ENCODE measurements at regions of chr5 and their contacts with region 1.

Region 1: GRCh38 chr5:132456296-132457001 is 34.1 kb downstream of the IRF1 start:
- DNase-seq: peak; percentile 85
- ATAC-seq: peak; percentile 65
- H3K4me3 Mint-ChIP-seq: peak overlapping the region; percentile 54
- H3K27ac Mint-ChIP-seq: peak overlapping the region; percentile 99
- H3K4me1 Mint-ChIP-seq: peaks cover 90% of the 10 kb centered on the region
- H3K27me3 Mint-ChIP-seq: no peaks in the 10 kb centered on the region

Region 2: GRCh38 chr5:132073231-132074013 is 383.0 kb before region 1 on chr5 and contains the start of gene CSF2:
- CTCF ChIA-PET with region 1: no interaction called
- DNase-seq: no peak
- ATAC-seq: no peak
- H3K4me3 Mint-ChIP-seq: peak within 1 kb of the TSS; percentile 26
- H3K27ac Mint-ChIP-seq: peak within 1 kb of the TSS; percentile 69
- H3K4me1 Mint-ChIP-seq: peaks cover 84% of the 10 kb centered on the region
- H3K27me3 Mint-ChIP-seq: no peaks in the 10 kb centered on the region
- total RNA-seq, gene CSF2: 4.9 to 164 TPM

Region 3: GRCh38 chr5:132410451-132411381 is 45.7 kb before region 1 on chr5:
- CTCF ChIA-PET with region 1: interaction called, 10 read pairs
- DNase-seq: peak; percentile 91
- ATAC-seq: peak; percentile 79
- H3K4me3 Mint-ChIP-seq: peak overlapping the region; percentile 97
- H3K27ac Mint-ChIP-seq: peak overlapping the region; percentile 99
- H3K4me1 Mint-ChIP-seq: peaks cover 58% of the 10 kb centered on the region
- H3K27me3 Mint-ChIP-seq: no peaks in the 10 kb centered on the region

Region 4: GRCh38 chr5:132437604-132438266 is 18.7 kb before region 1 on chr5:
- CTCF ChIA-PET with region 1: interaction called, 131 read pairs
- DNase-seq: peak; percentile 86
- ATAC-seq: peak; percentile 96
- H3K4me3 Mint-ChIP-seq: peak overlapping the region; percentile 43
- H3K27ac Mint-ChIP-seq: peak overlapping the region; percentile 86
- H3K4me1 Mint-ChIP-seq: peaks cover 81% of the 10 kb centered on the region
- H3K27me3 Mint-ChIP-seq: no peaks in the 10 kb centered on the region

Region 5: GRCh38 chr5:132473019-132473531 is 16.6 kb after region 1 on chr5:
- CTCF ChIA-PET with region 1: interaction called, 56 read pairs
- DNase-seq: peak; percentile 96
- ATAC-seq: peak; percentile 90
- H3K4me3 Mint-ChIP-seq: peak overlapping the region; percentile 6
- H3K27ac Mint-ChIP-seq: peak overlapping the region; percentile 89
- H3K4me1 Mint-ChIP-seq: peaks cover 91% of the 10 kb centered on the region
- H3K27me3 Mint-ChIP-seq: no peaks in the 10 kb centered on the region

Region 6: GRCh38 chr5:132490486-132491367 is 34.3 kb after region 1 on chr5 and contains the start of gene IRF1:
- CTCF ChIA-PET with region 1: interaction called, 25 read pairs
- DNase-seq: peak; percentile 98
- ATAC-seq: peak; percentile 79
- H3K4me3 Mint-ChIP-seq: peak within 1 kb of the TSS; percentile 95
- H3K27ac Mint-ChIP-seq: peak within 1 kb of the TSS; percentile 97
- H3K4me1 Mint-ChIP-seq: peaks cover 66% of the 10 kb centered on the region
- H3K27me3 Mint-ChIP-seq: no peaks in the 10 kb centered on the region
- total RNA-seq, gene IRF1: 205 to 223 TPM

Region 7: GRCh38 chr5:132510076-132510475 is 53.6 kb after region 1 on chr5:
- CTCF ChIA-PET with region 1: no interaction called
- DNase-seq: no peak
- ATAC-seq: no peak
- H3K4me3 Mint-ChIP-seq: no peak overlapping the region
- H3K27ac Mint-ChIP-seq: no peak overlapping the region
- H3K4me1 Mint-ChIP-seq: peaks cover 13% of the 10 kb centered on the region
- H3K27me3 Mint-ChIP-seq: peaks cover 22% of the 10 kb centered on the region

Region 8: DNA sequence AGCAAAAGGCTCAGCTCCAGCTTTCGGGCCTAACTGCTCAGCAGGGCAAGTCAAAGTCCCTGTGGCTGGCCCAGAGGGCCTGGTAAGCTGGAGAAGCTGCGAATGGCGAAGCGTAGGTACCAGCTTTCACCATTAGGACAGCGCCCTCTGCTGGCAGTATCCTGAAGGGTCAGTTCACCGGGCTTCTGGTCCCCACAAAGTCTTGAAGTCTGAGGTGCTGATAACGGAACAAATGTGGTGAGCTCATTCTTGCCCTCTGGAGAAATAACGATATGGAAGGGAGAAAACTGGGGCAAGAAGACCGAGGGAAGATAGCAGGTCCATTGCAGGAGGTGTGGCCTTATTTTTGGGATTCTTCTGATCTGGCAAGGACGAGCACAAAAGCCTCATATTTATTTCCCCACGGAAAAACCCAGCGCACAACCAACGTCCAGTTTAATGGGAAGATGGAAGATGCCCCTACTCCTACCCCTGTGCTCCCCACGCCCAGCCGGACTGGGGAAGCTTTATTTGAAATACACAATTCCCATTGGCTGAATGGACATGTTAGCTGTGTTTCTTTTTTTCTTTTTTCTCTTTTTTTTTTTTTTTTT is 363.8 kb after region 1 on chr5:
- CTCF ChIA-PET with region 1: no interaction called
- DNase-seq: peak; percentile 94
- ATAC-seq: peak; percentile 96
- H3K4me3 Mint-ChIP-seq: no peak overlapping the region
- H3K27ac Mint-ChIP-seq: no peak overlapping the region
- H3K4me1 Mint-ChIP-seq: peaks cover 25% of the 10 kb centered on the region
- H3K27me3 Mint-ChIP-seq: peaks cover 27% of the 10 kb centered on the region